Posterior vena cava (tissue), 2 donors: ENCODE measurements at regions of chr2 and their contacts with region 1.

Region 1: GRCh38 chr2:47850198-47850597 is 56.1 kb downstream of the FBXO11 start:
- DNase-seq: no peak

Region 2: DNA sequence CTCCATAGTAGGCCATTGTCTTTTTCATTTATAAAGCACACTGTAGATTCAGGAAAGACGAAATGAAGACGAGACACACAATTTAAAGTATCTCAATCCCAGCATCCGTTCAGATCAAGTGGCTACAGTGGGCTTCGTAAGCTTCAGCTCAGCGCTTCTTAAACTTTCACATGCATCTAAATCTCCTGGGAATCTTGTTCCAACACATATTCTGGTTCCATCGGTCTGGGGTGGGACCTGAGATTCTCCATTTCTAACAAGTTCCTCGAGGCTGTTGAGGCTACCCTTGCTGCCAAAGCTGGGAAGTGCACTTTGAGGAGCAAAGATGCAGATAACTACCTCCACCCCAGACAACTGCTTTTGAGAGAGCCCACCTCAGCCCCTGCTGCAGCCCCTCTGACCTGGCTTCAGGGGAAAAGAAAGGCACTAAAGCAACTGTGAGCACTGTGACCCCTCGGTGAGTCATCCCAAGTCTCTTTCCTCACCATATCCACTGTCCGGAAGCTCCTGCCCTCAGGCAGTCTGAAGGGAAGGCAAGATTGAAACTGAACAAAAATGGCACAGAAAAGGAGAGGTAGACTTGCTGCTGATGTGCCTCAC is 257.2 kb after region 1 on chr2:
- intact Hi-C with region 1: loop called in 1 of 2 experiments (anchors 10 kb)
- DNase-seq: no peak

Region 3: GRCh38 chr2:48420512-48421197 is 570.5 kb after region 1 on chr2:
- intact Hi-C with region 1: loop called in 1 of 2 experiments (anchors 10 kb)
- DNase-seq: peak; percentile 97